K562 (cell line): ENCODE measurements at regions of chr9 and their contacts with region 1.

Region 1: DNA sequence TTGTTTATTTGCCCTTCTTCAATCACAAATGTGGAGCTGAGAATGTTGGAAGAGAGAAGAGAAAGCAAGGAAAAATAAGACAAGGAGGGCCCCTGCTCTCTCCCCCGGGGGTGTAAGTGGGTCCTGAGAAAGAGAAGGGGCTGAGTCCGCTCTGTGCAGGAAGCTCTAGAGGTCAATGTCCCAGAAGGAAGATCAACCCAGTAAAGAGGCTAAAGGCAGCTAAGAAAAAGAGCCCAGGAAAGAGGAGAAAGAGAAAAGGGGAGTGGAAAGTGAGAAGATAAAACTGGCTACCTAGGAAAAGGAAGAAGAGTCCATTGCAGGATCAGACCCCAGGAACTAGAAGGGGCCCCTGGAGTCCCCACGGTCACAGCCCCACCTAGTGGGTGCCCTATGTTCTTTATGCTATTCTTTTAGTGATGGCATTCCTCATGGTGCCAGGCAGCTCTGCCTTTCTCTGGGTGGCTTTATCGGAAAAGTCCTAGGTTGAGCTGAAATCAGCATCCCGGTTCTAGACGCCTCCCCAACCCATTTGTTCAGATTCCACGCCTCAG is 583.4 kb downstream of the ACTL7B start:
- DNase-seq: peak; percentile 47 to 65 (median 51)
- ATAC-seq: peak; percentile 91
- H3K4me3 ChIP-seq: no peak overlapping the region
- H3K27ac ChIP-seq: no peak overlapping the region
- H3K4me1 ChIP-seq: no peaks in the 10 kb centered on the region
- H3K27me3 ChIP-seq: no peaks in the 10 kb centered on the region
- CTCF ChIP-seq: peak; percentile 51 to 73 (median 65); a peak in 5 of 6 replicates
- EP300 ChIP-seq: no peak
- POLR2A ChIP-seq: no peak
- RAD21 ChIP-seq: peak; percentile 70 to 74

Region 2: DNA sequence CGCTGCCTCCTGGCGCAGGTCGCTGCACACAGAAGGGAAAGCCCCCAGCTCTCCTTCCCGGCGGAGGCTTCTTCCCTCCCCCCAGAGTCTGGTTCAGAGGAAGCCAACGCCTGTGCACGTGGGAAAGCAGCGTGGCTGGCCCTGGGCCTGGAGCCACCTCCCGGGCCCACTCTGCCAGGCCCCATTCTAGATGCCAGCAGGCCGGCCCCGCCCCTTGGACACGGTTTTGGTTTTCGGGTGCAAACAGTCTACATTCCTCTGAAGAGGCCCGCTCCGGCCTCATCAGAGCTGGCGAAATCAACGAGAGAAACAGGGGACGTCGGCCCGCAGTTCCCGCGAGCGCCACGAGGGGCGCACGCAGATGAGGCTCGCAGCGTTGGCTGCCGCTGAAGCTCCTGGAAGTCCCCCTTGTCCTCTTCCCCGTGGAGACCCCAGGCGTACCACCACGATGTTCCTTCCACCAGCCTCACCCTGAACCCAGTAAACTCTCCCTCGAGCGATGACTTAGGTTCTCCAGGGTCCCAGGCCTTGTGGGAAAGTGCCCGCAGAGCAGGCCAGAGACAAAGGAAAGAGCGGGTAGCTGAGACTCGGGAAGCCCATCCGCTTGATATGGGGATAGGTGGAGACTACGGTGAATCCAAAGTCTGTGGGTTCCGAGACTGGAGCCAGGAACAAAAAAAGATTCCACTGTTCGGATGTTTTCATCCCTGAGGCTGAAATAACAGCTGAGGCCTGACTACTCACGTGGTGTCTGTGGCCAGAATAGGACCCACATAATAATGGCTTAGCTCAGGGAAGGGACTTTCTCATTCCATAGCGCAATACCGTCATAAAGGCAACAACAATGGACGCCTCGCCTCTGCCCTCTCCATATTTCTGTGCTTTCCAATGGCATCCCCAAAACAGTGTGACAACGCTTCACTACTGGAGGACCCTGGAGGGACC is 847.1 kb before region 1 on chr9:
- CTCF ChIA-PET with region 1: no interaction called
- POLR2A ChIA-PET with region 1: no interaction called
- in situ Hi-C with region 1: no loop called
- intact Hi-C with region 1: loop called (anchors 2 kb)
- DNase-seq: peak; percentile 54 to 73 (median 66)
- ATAC-seq: peak; percentile 93
- H3K4me3 ChIP-seq: no peak overlapping the region
- H3K27ac ChIP-seq: no peak overlapping the region
- H3K4me1 ChIP-seq: peaks cover 0 to 7% of the 10 kb centered on the region in 2 experiments; a peak in 2 of 5 replicates
- H3K27me3 ChIP-seq: peaks cover 3 to 25% of the 10 kb centered on the region in 2 experiments; a peak in 4 of 5 replicates
- CTCF ChIP-seq: peak; percentile 72 to 93 (median 74); a peak in 5 of 6 replicates
- EP300 ChIP-seq: no peak
- POLR2A ChIP-seq: no peak
- RAD21 ChIP-seq: peak in 1 of 2 experiments; percentile 52; a peak in 2 of 4 replicates

Region 3: DNA sequence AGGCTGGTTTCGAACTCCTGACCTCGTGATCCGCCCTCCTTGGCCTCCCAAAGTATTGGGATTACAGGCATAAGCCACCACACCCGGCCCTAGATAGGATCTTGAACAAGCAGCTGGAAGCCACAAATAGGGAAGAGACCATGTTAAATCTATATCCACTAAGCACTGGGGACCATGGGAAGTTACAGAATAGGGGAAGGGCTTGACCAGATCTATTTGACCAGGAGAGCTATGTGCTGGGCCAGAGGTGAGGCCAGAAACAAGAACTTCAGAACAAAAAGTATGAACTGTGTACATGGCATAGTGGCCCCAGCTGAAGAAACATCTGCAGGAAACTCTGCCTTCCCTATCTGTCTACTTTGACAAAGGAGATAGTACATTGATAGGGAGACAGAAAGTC is 793.6 kb before region 1 on chr9:
- CTCF ChIA-PET with region 1: no interaction called
- POLR2A ChIA-PET with region 1: no interaction called
- in situ Hi-C with region 1: loop called (anchors 5 kb)
- intact Hi-C with region 1: loop called (anchors 5 kb)
- DNase-seq: no peak
- ATAC-seq: no peak
- H3K4me3 ChIP-seq: no peak overlapping the region
- H3K27ac ChIP-seq: no peak overlapping the region
- H3K4me1 ChIP-seq: no peaks in the 10 kb centered on the region
- H3K27me3 ChIP-seq: peaks cover 0 to 4% of the 10 kb centered on the region in 2 experiments; a peak in 3 of 5 replicates
- CTCF ChIP-seq: no peak
- EP300 ChIP-seq: no peak
- POLR2A ChIP-seq: no peak
- RAD21 ChIP-seq: no peak

Region 4: GRCh38 chr9:107484117-107484723 is 788.2 kb before region 1 on chr9:
- CTCF ChIA-PET with region 1: no interaction called
- POLR2A ChIA-PET with region 1: no interaction called
- in situ Hi-C with region 1: loop called (anchors 5 kb)
- intact Hi-C with region 1: loop called (anchors 5 kb)
- DNase-seq: peak; percentile 27 to 56 (median 40)
- ATAC-seq: peak; percentile 89
- H3K4me3 ChIP-seq: no peak overlapping the region
- H3K27ac ChIP-seq: no peak overlapping the region
- H3K4me1 ChIP-seq: peaks cover 0 to 11% of the 10 kb centered on the region in 2 experiments; a peak in 3 of 5 replicates
- H3K27me3 ChIP-seq: peaks cover 0 to 7% of the 10 kb centered on the region in 2 experiments; a peak in 1 of 5 replicates
- CTCF ChIP-seq: peak; percentile 31 to 66 (median 53); a peak in 5 of 6 replicates
- EP300 ChIP-seq: no peak
- POLR2A ChIP-seq: no peak
- RAD21 ChIP-seq: peak; percentile 84 to 93

Region 5: GRCh38 chr9:107919263-107919662 is 353.2 kb before region 1 on chr9:
- CTCF ChIA-PET with region 1: no interaction called
- POLR2A ChIA-PET with region 1: no interaction called
- in situ Hi-C with region 1: no loop called
- intact Hi-C with region 1: loop called (anchors 10 kb)
- DNase-seq: no peak
- ATAC-seq: no peak
- H3K4me3 ChIP-seq: no peak overlapping the region
- H3K27ac ChIP-seq: no peak overlapping the region
- H3K4me1 ChIP-seq: no peaks in the 10 kb centered on the region
- H3K27me3 ChIP-seq: no peaks in the 10 kb centered on the region
- CTCF ChIP-seq: no peak
- EP300 ChIP-seq: no peak
- POLR2A ChIP-seq: no peak
- RAD21 ChIP-seq: no peak

Region 6: GRCh38 chr9:108125625-108126024 is 146.8 kb before region 1 on chr9:
- CTCF ChIA-PET with region 1: no interaction called
- POLR2A ChIA-PET with region 1: no interaction called
- in situ Hi-C with region 1: no loop called
- intact Hi-C with region 1: loop called (anchors 5 kb)
- DNase-seq: peak; percentile 45 to 56 (median 51)
- ATAC-seq: peak; percentile 90
- H3K4me3 ChIP-seq: no peak overlapping the region
- H3K27ac ChIP-seq: no peak overlapping the region
- H3K4me1 ChIP-seq: no peaks in the 10 kb centered on the region
- H3K27me3 ChIP-seq: no peaks in the 10 kb centered on the region
- CTCF ChIP-seq: peak; percentile 53 to 71 (median 53)
- EP300 ChIP-seq: no peak
- POLR2A ChIP-seq: no peak
- RAD21 ChIP-seq: peak in 1 of 2 experiments; percentile 32; a peak in 2 of 4 replicates

Region 7: GRCh38 chr9:108290839-108291585 is 18.6 kb after region 1 on chr9:
- CTCF ChIA-PET with region 1: no interaction called
- POLR2A ChIA-PET with region 1: no interaction called
- in situ Hi-C with region 1: no loop called
- intact Hi-C with region 1: no loop called
- DNase-seq: no peak
- ATAC-seq: no peak
- H3K4me3 ChIP-seq: no peak overlapping the region
- H3K27ac ChIP-seq: no peak overlapping the region
- H3K4me1 ChIP-seq: peaks cover 0 to 2% of the 10 kb centered on the region in 2 experiments; a peak in 2 of 5 replicates
- H3K27me3 ChIP-seq: peaks cover 0 to 6% of the 10 kb centered on the region in 2 experiments; a peak in 1 of 5 replicates
- CTCF ChIP-seq: no peak
- EP300 ChIP-seq: no peak
- POLR2A ChIP-seq: no peak
- RAD21 ChIP-seq: no peak

Region 8: GRCh38 chr9:108316630-108317029 is 44.2 kb after region 1 on chr9:
- CTCF ChIA-PET with region 1: no interaction called
- POLR2A ChIA-PET with region 1: no interaction called
- in situ Hi-C with region 1: no loop called
- intact Hi-C with region 1: no loop called
- DNase-seq: no peak
- ATAC-seq: no peak
- H3K4me3 ChIP-seq: no peak overlapping the region
- H3K27ac ChIP-seq: no peak overlapping the region
- H3K4me1 ChIP-seq: no peaks in the 10 kb centered on the region
- H3K27me3 ChIP-seq: no peaks in the 10 kb centered on the region
- CTCF ChIP-seq: no peak
- EP300 ChIP-seq: no peak
- POLR2A ChIP-seq: no peak
- RAD21 ChIP-seq: no peak